ENCODE measurements at regions of chr7 and their contacts with region 1.

Region 1: GRCh38 chr7:92134271-92135051 is at the start of gene CYP51A1:
- DNase-seq: peak; percentile 94
- ATAC-seq: peak; percentile 92
- H3K4me3 Mint-ChIP-seq: peak within 1 kb of the TSS; percentile 98
- H3K27ac Mint-ChIP-seq: peak within 1 kb of the TSS; percentile 99
- H3K4me1 Mint-ChIP-seq: peaks cover 20% of the 10 kb centered on the region
- H3K27me3 Mint-ChIP-seq: no peaks in the 10 kb centered on the region
- total RNA-seq, gene CYP51A1: 57.8 to 63.3 TPM

Region 2: DNA sequence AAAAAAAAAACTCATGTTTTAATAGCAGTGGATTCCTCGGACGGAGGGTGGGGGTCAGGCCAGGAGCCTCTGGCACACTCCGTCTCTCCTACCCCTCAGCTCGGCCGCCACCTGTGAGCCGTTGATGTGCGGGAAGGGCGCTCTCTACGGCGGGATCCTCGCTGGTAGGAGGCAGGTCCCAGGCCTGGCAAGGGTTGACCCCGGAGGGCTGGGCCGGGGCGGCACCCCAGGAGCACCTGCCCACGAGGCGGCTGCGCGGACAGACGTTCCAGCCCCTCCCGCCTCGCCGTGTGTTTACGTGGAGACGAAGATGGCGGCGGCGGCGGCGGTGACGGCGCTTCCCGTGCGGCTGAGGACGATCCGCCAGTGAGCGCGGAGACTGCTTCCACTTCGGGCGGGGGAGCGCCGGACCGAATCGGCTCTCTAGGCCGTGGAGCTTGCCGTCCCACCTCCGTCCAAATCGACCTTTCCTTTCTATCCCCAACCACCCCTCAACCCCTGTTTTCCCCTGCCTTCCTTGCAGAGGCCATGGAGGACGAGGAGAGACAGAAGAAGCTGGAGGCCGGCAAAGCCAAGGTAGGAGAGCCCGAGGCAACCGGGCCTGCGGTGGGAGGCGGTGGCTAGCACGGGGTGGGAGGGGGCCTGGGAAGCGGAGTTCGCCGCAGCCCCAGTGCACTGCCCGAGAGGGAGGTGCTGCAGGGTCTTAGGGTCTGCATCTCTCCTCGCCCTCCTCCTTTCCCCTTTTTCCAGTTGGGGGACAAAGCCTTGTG is 193.7 kb before region 1 on chr7 and contains the start of gene AKAP9:
- CTCF ChIA-PET with region 1: no interaction called
- POLR2A ChIA-PET with region 1: no interaction called
- intact Hi-C with region 1: loop called (anchors 1 kb)
- DNase-seq: peak; percentile 94
- ATAC-seq: peak; percentile 91
- H3K4me3 Mint-ChIP-seq: peak within 1 kb of the TSS; percentile 87
- H3K27ac Mint-ChIP-seq: peak within 1 kb of the TSS; percentile 94
- H3K4me1 Mint-ChIP-seq: peaks cover 29% of the 10 kb centered on the region
- H3K27me3 Mint-ChIP-seq: no peaks in the 10 kb centered on the region
- total RNA-seq, gene AKAP9: 25.3 to 25.4 TPM

Region 3: DNA sequence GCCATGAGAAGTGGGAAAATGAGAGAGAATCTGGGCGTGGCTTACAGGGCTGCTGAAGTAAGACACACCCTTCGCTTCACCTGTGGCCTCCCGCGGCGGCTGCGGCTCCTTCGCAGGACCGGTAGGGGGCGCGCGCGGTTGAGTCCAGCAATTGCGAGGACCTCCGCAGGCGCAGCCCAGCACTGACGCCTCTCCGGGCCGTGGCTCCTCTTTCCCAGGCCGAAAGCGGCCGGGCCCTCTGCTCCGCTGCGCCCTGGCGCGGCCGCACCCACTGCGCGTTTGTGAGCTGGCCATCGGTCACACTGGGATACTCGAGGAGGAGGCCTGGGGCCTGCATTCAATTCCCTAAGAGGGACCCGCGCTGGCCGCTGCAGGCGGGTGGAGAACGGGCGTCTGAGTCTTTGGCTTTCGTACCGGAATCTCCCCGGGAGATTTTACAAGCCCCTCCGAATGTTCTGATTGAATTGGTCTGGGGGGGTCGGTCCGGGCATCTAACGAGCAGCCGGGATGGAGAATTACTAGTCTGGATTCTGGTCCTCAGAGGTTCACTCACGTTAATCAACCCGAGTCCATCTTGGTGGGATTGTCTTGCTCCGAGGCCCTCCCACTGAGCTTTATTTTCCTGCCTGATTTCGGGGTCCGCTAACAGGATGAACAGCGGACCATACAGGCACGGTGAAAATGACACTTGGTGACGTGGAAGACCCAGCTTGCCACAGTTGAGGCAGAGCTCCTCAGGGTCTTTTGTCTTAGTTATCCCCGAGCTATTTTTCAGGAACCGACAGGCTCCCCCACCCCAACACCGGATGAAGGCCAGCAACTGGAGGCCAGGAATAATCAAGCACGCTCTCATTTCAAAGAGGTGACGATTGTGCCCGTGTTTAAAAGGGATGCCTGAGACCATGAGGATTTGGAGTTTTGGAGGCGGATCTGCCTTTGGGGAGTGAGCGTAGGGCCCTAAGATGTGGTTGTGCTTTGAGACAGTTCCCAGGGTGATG is 44.8 kb after region 1 on chr7 and contains the start of gene LRRD1:
- CTCF ChIA-PET with region 1: interaction called, 5 read pairs
- POLR2A ChIA-PET with region 1: no interaction called
- intact Hi-C with region 1: loop called in 1 of 2 experiments (anchors 1 kb)
- DNase-seq: peak; percentile 95
- ATAC-seq: peak; percentile 100
- H3K4me3 Mint-ChIP-seq: peak within 1 kb of the TSS; percentile 72
- H3K27ac Mint-ChIP-seq: peak within 1 kb of the TSS; percentile 47
- H3K4me1 Mint-ChIP-seq: peaks cover 7% of the 10 kb centered on the region
- H3K27me3 Mint-ChIP-seq: peaks cover 5% of the 10 kb centered on the region
- total RNA-seq, gene LRRD1: not detected

Region 4: GRCh38 chr7:92432355-92432870 is 298.0 kb after region 1 on chr7:
- CTCF ChIA-PET with region 1: no interaction called
- POLR2A ChIA-PET with region 1: no interaction called
- intact Hi-C with region 1: no loop called
- DNase-seq: no peak
- ATAC-seq: no peak
- H3K4me3 Mint-ChIP-seq: no peak overlapping the region
- H3K27ac Mint-ChIP-seq: no peak overlapping the region
- H3K4me1 Mint-ChIP-seq: no peaks in the 10 kb centered on the region
- H3K27me3 Mint-ChIP-seq: peaks cover under 1% of the 10 kb centered on the region

Region 5: DNA sequence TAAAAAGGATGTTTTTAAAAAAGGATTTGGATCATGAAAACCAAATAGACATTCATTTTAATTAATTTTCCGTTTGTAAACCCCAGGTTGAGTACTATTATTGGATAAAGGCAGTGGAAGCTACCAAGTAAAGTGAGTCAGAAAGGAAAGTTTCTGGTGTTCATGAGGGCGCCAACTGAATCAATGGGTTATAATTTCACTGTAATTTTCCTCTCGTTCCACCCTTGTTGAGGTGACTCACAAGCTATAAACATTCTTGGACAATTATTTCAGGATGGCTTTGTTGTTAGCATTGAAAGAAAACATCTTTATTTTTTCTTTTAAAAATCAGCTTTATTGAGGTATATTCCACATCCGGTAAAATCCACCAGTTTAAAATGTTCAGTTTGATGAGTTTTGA is 460.8 kb after region 1 on chr7:
- CTCF ChIA-PET with region 1: no interaction called
- POLR2A ChIA-PET with region 1: no interaction called
- intact Hi-C with region 1: loop called in 1 of 2 experiments (anchors 1 kb)
- DNase-seq: no peak
- ATAC-seq: no peak
- H3K4me3 Mint-ChIP-seq: no peak overlapping the region
- H3K27ac Mint-ChIP-seq: no peak overlapping the region
- H3K4me1 Mint-ChIP-seq: peaks cover 7% of the 10 kb centered on the region
- H3K27me3 Mint-ChIP-seq: peaks cover 3% of the 10 kb centered on the region

Region 6: DNA sequence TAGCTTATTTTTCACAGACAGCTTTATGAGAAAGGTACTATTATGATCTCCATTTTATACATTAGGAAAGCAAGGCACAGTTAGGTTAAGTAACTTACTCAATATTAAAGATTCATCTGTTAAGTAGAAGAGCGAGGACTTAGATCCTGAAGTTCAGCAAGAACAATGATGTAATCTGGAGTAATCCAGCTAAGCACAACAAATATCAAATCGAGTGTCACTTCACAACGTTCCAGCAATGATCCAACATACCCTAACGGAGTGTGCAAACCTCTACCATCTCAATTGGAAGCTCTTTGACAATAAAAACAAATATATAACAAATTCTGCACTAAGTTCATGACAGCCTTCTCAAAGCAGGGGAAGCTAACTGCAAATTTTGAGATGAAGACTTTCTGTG is 1318.8 kb after region 1 on chr7:
- CTCF ChIA-PET with region 1: no interaction called
- POLR2A ChIA-PET with region 1: no interaction called
- intact Hi-C with region 1: no loop called
- DNase-seq: no peak
- ATAC-seq: no peak
- H3K4me3 Mint-ChIP-seq: no peak overlapping the region
- H3K27ac Mint-ChIP-seq: no peak overlapping the region
- H3K4me1 Mint-ChIP-seq: no peaks in the 10 kb centered on the region
- H3K27me3 Mint-ChIP-seq: peaks cover 3% of the 10 kb centered on the region

Measured in activated CD4-positive, alpha-beta T cell treated with anti-CD3 and anti-CD28 coated beads for 36 hours (primary cell).